Activated CD4-positive, alpha-beta T cell treated with anti-CD3 and anti-CD28 coated beads, Interleukin-2, amount 10 ng/mL, durations not matched to agents 24 days and 14 days (primary cell): ENCODE measurements at regions of chrX and their contacts with region 1.

Region 1: DNA sequence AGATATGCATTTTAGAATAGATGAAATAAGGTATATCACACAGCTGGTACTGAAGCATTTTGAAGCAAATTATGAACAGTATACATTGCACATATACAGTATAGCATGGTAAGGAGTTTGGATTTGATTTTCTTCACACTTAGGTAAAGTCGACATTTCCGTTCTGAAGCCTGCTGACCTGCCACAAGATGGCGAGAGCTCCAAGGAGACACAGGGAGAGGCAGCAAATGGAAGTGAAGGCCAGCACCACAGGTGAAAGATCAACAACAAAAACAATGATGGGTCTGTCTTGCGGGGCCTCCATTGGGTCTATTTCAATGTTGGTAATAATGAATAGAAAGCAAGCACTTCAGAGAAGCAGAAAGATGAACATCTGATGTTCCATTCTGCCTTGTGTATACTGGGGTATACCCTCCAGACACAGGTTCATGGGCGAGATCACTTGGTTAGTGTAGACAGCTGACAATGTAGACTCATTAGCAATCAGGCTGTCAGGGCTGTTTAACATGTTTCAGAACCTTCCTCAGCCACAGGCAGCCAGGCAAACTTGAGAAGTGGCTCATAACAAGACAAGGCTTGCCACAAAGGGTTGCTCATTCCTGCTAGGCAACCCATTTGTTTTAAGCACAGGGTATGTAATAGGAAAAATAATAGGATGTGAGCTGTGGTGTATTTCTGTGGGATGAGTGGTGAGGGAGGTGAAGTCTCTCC is 21.4 kb upstream of the NOX1 start:
- DNase-seq: peak; percentile 66
- H3K4me3 Mint-ChIP-seq: no peak overlapping the region
- H3K27ac Mint-ChIP-seq: no peak overlapping the region
- H3K4me1 Mint-ChIP-seq: no peaks in the 10 kb centered on the region
- H3K27me3 Mint-ChIP-seq: no peaks in the 10 kb centered on the region

Region 2: GRCh38 chrX:100911726-100912125 is 16.2 kb after region 1 on chrX:
- intact Hi-C with region 1: no loop called
- DNase-seq: no peak
- H3K4me3 Mint-ChIP-seq: no peak overlapping the region
- H3K27ac Mint-ChIP-seq: no peak overlapping the region
- H3K4me1 Mint-ChIP-seq: no peaks in the 10 kb centered on the region
- H3K27me3 Mint-ChIP-seq: peaks cover 1% of the 10 kb centered on the region

Region 3: GRCh38 chrX:101206471-101206870 is 311.0 kb after region 1 on chrX:
- intact Hi-C with region 1: loop called (anchors 1 kb)
- DNase-seq: peak; percentile 56
- H3K4me3 Mint-ChIP-seq: no peak overlapping the region
- H3K27ac Mint-ChIP-seq: no peak overlapping the region
- H3K4me1 Mint-ChIP-seq: peaks cover 11% of the 10 kb centered on the region
- H3K27me3 Mint-ChIP-seq: no peaks in the 10 kb centered on the region

Region 4: GRCh38 chrX:101942889-101943288 is 1047.4 kb after region 1 on chrX:
- intact Hi-C with region 1: no loop called
- DNase-seq: no peak
- H3K4me3 Mint-ChIP-seq: no peak overlapping the region
- H3K27ac Mint-ChIP-seq: no peak overlapping the region
- H3K4me1 Mint-ChIP-seq: no peaks in the 10 kb centered on the region
- H3K27me3 Mint-ChIP-seq: peaks cover 7% of the 10 kb centered on the region